MCF 10A (cell line): ENCODE measurements at regions of chr6 and their contacts with region 1.

Region 1: GRCh38 chr6:149863697-149864577 is at the start of gene LRP11:
- DNase-seq: peak; percentile 87
- H3K4me3 Mint-ChIP-seq: peak within 1 kb of the TSS; percentile 90
- H3K27ac Mint-ChIP-seq: peak within 1 kb of the TSS; percentile 96
- H3K4me1 Mint-ChIP-seq: peaks cover 44% of the 10 kb centered on the region
- H3K27me3 Mint-ChIP-seq: no peaks in the 10 kb centered on the region
- CTCF ChIP-seq: no peak
- total RNA-seq, gene LRP11: 38.1 and 46.1 TPM in 2 replicates

Region 2: GRCh38 chr6:149628875-149629510 is 234.9 kb before region 1 on chr6:
- CTCF ChIA-PET with region 1: no interaction called
- POLR2A ChIA-PET with region 1: no interaction called
- intact Hi-C with region 1: no loop called
- DNase-seq: no peak
- H3K4me3 Mint-ChIP-seq: no peak overlapping the region
- H3K27ac Mint-ChIP-seq: no peak overlapping the region
- H3K4me1 Mint-ChIP-seq: no peaks in the 10 kb centered on the region
- H3K27me3 Mint-ChIP-seq: no peaks in the 10 kb centered on the region
- CTCF ChIP-seq: no peak

Region 3: DNA sequence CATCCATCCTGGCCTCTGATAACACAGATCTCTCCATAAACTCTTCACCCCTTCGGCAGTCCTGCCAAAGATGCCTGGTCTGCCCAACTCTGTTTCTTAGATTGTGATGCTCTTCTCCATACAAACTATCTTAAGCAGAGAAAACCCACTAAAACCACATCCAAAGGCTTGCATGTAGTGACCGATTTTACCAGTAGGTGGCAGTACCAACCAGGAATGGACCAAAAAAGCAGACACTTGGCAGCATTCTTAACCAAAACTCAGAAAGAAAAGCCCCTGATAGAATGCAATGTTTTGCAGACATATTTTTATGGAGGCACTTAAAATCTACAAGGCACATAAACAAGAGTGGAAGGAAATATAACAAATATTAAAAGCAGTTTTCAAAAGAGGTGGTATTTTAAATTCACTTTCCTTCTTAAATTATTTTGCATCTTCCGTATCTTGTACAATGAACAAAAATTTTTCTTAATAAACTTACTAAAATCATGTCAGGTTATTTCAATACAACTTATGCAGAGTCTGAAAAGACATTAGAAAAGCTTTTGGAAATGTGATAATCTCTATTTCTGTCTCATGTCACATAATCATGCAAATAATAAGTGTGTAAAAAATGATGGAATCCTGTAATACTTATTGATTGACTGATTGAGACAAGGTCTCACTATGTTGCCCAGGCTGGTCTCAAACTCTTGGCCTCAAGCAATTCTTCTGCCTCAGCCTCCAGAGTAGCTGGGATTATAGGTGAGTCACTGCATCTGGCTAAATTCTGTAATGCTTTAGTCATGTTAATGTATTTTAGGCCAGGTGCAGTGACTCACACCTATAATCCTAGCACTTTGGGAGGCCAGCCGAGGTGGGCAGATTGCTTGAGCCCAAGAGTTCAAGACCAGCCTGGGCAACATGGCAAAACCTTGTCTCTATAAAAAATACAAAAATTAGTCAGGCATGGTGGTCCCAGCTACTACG is 29.1 kb before region 1 on chr6:
- CTCF ChIA-PET with region 1: interaction called, 60 read pairs
- POLR2A ChIA-PET with region 1: interaction called, 255 read pairs
- intact Hi-C with region 1: loop called (anchors 1 kb)
- DNase-seq: peak; percentile 80
- H3K4me3 Mint-ChIP-seq: no peak overlapping the region
- H3K27ac Mint-ChIP-seq: no peak overlapping the region
- H3K4me1 Mint-ChIP-seq: no peaks in the 10 kb centered on the region
- H3K27me3 Mint-ChIP-seq: no peaks in the 10 kb centered on the region
- CTCF ChIP-seq: peak; percentile 80

Region 4: DNA sequence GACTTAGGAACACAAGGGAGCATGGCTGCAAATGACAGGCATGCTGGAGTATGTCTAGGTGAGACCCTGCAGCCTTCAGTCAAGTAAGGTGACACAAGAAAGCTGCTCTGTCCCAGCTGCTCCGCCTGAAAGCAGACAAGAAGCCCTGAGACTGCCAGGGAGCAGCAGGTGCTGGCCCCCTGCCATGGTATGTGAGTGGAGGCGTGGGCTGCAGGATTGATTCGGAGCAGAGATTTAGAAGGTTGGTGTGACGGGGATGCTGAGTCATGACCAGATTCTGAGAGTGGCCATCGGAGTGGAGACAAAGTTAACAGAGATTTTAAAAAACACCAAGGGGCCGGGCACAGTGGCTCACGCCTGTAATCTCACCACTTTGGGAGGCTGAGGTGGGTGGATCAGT is 17.6 kb before region 1 on chr6:
- CTCF ChIA-PET with region 1: interaction called, 60 read pairs
- POLR2A ChIA-PET with region 1: interaction called, 255 read pairs
- intact Hi-C with region 1: no loop called
- DNase-seq: peak; percentile 94
- H3K4me3 Mint-ChIP-seq: peak overlapping the region; percentile 38
- H3K27ac Mint-ChIP-seq: no peak overlapping the region
- H3K4me1 Mint-ChIP-seq: peaks cover 49% of the 10 kb centered on the region
- H3K27me3 Mint-ChIP-seq: no peaks in the 10 kb centered on the region
- CTCF ChIP-seq: no peak

Region 5: GRCh38 chr6:149890629-149891045 is 26.7 kb after region 1 on chr6:
- CTCF ChIA-PET with region 1: interaction called, 10 read pairs
- POLR2A ChIA-PET with region 1: interaction called, 104 read pairs
- intact Hi-C with region 1: loop called (anchors 2 kb)
- DNase-seq: peak; percentile 79
- H3K4me3 Mint-ChIP-seq: peak overlapping the region; percentile 62
- H3K27ac Mint-ChIP-seq: peak overlapping the region; percentile 69
- H3K4me1 Mint-ChIP-seq: peaks cover 57% of the 10 kb centered on the region
- H3K27me3 Mint-ChIP-seq: no peaks in the 10 kb centered on the region
- CTCF ChIP-seq: no peak

Region 6: DNA sequence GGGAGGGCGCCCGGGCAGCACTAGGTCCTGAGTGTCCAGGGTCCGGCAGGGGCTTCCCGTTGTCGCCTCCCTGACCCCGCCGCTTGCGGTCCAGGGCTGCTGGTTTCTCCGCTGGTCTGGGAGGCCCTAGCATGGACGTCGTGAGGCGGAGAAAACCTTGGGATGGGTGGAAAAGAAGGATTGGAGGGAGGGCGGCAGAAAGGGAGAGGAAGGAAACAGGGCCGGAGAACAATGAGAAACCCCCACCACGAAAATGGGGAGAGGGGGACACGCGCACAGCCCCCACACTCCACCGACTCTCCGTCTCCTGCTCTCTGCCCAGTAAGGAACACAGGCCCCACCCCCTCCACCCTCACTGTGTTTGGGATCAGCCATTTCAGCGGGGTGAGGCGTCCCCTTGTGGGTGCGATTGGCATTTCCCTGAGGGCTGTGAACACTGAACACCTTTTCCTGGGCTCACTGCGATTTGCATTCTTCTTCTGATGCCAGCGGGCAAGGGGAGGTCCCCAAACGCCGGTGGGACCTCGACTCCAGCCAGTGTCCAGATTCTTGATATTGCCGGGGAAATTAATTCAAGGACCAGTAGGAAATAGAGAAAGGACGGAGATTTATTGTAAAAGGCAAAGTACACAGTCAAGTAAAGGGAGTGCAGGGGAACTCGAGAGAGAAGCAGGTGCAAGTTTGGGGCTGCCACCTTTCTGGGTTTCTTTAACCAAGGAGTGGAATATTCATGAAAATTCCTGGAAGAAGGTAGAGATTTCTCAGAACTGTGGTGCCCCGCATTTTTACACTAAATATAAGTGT is 62.2 kb after region 1 on chr6:
- CTCF ChIA-PET with region 1: interaction called, 6 read pairs
- POLR2A ChIA-PET with region 1: interaction called, 6 read pairs
- intact Hi-C with region 1: loop called (anchors 1 kb)
- DNase-seq: peak; percentile 90
- H3K4me3 Mint-ChIP-seq: peak overlapping the region; percentile 12
- H3K27ac Mint-ChIP-seq: no peak overlapping the region
- H3K4me1 Mint-ChIP-seq: peaks cover 19% of the 10 kb centered on the region
- H3K27me3 Mint-ChIP-seq: peaks cover 32% of the 10 kb centered on the region
- CTCF ChIP-seq: peak; percentile 94